Posterior cingulate gyrus (tissue), 11 donors: ENCODE measurements at regions of chr14 and their contacts with region 1.

Region 1: DNA sequence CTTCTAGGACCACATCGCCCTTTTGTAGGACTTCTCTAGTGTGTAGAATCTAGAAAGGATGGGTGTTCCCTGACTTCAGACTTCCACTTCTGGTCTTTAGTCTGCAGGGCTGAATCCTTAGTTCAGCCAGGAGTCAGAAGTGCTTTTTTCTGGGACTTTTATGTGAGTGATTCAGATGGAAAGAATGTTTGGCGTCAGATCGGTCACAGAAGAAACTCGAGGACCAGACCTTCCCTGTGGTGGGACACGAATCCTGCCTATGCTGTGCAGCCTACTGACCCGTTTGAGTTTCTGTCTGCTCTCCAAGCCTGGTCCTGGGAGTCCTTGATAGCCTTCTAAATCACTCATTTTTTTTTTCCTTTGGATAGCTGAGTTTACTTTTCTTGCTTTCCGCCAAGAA is 165.4 kb upstream of the SSTR1 start:
- DNase-seq: no peak

Region 2: GRCh38 chr14:38073641-38074040 is 31.3 kb after region 1 on chr14:
- intact Hi-C with region 1: no loop called
- DNase-seq: no peak

Region 3: DNA sequence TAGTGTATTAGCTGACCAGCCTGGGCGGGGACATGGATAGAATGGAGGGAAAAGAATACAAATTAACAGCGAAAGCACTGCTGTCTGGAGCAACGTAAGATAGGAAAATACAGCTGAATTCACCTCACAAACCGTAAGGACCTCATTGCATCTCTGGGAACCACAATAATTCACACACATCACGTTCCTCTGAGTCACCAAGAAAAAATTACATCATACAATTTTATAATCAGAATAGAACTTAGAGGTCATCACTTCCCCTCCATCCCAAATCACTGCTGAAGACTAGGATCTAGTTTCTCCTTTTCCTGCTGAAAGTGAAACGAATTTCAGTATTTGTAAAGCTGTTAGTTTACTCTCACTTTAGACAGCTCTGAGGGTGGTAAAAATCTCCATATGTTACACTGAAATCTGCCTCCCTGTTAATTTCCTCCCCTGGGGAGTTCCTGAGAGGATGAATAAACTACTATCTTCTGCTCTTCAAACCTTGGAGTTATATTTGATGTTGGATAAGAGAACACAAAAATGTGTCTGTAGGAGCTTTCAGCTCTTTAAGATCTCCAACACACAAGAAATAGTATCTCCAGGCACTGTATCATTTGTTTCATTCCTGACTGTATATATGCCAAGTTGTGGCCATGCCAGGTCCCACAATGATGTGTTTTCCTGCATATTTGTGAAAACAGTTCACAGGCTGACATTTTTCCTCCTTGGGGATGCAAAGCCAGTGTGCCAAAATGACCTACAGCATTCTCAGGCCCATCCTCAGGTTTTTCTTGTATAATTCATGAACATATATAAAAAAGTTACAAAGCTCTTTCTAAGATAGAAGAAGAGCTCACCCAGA is 101.5 kb after region 1 on chr14:
- intact Hi-C with region 1: loop called (anchors 10 kb)
- DNase-seq: no peak

Region 4: DNA sequence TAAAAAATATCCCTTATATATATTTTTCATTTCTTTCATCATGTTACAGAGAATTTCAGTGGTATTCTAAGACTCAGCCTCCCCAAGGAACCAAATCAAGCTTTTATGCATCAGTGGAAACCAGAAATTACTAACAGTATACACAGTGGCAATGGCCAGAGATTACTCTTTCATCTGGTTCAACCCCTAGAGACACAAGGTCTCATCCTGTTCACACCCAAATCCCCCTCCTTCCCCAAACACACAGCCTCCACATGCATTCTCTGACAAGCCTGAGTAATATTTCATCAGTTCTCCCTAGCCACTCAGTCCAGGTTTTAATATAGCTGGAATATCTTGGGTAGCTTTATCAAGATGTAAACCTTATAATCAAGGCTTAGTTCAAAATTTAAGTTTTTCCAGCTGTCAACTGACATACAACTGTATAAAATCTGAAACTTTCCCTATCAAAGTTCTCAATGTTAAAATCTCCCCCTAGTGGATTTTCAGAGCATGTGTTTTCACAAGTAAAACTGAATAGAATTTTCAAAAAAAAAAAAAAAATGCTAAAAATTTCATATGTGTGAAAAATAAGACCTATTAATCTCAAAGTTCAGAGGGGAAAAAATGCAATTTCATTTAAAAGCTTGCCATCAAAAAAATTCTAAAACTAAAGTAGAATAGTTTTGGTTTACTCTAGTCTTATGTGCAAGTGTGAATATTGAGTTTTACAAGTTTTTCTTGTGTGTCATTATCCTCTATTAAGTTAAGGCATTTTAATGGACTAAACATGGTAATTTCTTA is 154.8 kb after region 1 on chr14:
- intact Hi-C with region 1: no loop called
- DNase-seq: no peak